ENCODE measurements at regions of chr4 and their contacts with region 1.

Region 1: DNA sequence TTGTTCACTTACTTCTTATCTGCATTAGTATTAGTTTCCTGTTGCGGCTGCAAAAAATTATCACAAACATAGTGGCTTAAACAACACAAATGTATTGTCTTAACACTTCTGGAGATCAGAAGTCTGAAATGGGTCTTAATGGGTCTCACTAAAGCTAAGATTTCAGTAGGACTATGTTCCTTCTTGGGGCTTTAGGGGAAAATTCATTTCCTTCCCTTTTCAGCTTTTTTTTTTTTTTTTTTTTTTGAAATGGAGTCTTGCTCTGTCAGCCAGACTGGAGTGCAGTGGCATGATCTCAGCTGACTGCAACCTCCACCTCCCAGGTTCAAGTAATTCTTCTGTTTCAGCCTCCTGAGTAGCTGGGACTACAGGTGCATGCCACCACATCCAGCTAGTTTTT is 78.1 kb upstream of the KLF3 start:
- DNase-seq: no peak
- ATAC-seq: no peak
- H3K4me3 Mint-ChIP-seq: no peak overlapping the region
- H3K27ac Mint-ChIP-seq: no peak overlapping the region
- H3K4me1 Mint-ChIP-seq: no peaks in the 10 kb centered on the region
- H3K27me3 Mint-ChIP-seq: no peaks in the 10 kb centered on the region

Region 2: GRCh38 chr4:38598489-38598888 is 12.6 kb after region 1 on chr4:
- POLR2A ChIA-PET with region 1: interaction called, 10 read pairs
- DNase-seq: no peak
- ATAC-seq: no peak
- H3K4me3 Mint-ChIP-seq: no peak overlapping the region
- H3K27ac Mint-ChIP-seq: no peak overlapping the region
- H3K4me1 Mint-ChIP-seq: peaks cover 5% of the 10 kb centered on the region
- H3K27me3 Mint-ChIP-seq: no peaks in the 10 kb centered on the region

Region 3: DNA sequence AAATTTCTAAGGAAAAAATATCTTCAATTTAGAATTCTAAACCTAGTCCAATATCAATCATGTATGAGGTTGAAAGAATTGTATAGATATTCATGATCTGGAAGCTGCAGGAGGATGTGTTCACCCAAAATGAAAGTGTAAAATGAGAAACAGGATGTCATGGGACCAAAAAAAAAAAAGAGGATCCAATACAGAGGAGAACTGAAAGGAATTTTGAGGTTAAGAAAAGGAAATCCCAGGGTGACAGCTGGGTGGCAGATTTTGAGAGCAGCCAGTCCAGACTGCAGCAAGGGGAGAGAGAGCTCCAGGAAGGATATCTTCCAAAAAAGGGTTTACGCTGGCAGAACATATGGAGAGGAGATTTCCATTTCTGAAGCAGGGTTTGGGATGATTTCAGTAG is 158.0 kb after region 1 on chr4:
- POLR2A ChIA-PET with region 1: no interaction called
- DNase-seq: no peak
- ATAC-seq: no peak
- H3K4me3 Mint-ChIP-seq: no peak overlapping the region
- H3K27ac Mint-ChIP-seq: no peak overlapping the region
- H3K4me1 Mint-ChIP-seq: peaks cover 6% of the 10 kb centered on the region
- H3K27me3 Mint-ChIP-seq: peaks cover 5% of the 10 kb centered on the region

Measured in activated naive CD8-positive, alpha-beta T cell treated with anti-CD3 and anti-CD28 coated beads, Interleukin-2, amount 10 ng/mL, durations not matched to agents 7 days and 5 days (primary cell).